ENCODE measurements at regions of chr13 and their contacts with region 1.

Region 1: DNA sequence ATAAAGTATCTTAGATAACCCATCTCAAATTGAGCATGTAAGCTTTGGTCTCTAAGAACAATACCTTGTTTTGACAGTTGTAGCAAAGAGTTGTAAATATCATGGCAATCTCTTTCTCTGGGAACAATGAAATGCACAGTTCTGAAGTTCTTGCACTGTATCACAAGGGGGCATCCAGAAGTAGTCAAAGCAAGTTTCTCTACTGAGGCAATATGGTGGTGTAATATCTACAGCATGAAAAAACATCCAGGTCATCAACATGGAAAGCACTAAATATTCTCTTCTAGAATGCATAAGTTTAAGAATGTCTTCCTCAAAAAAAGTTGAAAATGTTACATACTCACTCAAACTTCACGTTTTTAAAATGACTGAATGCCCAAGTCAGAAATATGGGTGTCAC is 19.6 kb downstream of the MTMR6 start:
- DNase-seq: no peak
- ATAC-seq: peak; percentile 58
- H3K4me3 ChIP-seq: no peak overlapping the region
- H3K27ac ChIP-seq: no peak overlapping the region
- H3K4me1 ChIP-seq: no peaks in the 10 kb centered on the region
- H3K27me3 ChIP-seq: no peaks in the 10 kb centered on the region
- CTCF ChIP-seq: peak; percentile 26

Region 2: GRCh38 chr13:25062485-25062884 is 205.2 kb before region 1 on chr13:
- intact Hi-C with region 1: no loop called
- DNase-seq: no peak
- ATAC-seq: no peak
- H3K4me3 ChIP-seq: no peak overlapping the region
- H3K27ac ChIP-seq: no peak overlapping the region
- H3K4me1 ChIP-seq: no peaks in the 10 kb centered on the region
- H3K27me3 ChIP-seq: peaks cover 8% of the 10 kb centered on the region
- CTCF ChIP-seq: no peak

Region 3: DNA sequence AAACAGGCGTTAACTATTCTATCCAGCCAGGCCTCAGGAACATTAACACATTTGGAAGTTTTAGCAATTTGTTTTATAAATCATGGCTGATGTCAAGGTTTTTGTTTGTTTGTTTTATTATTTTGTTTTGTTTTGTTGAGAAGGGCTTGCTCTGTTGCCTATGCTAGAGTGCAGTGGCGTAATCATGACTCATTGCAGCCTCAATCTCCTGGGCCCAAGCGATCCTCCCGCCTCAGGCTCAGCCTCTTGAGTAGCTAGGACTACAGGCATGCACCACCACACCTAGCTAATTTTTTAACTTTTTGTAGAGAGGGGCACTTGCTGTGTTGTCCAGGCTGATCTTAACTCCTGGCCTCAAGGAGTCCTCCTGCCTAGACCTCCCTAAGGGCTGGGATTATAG is 62.0 kb after region 1 on chr13:
- intact Hi-C with region 1: loop called (anchors 10 kb)
- DNase-seq: no peak
- ATAC-seq: no peak
- H3K4me3 ChIP-seq: no peak overlapping the region
- H3K27ac ChIP-seq: no peak overlapping the region
- H3K4me1 ChIP-seq: no peaks in the 10 kb centered on the region
- H3K27me3 ChIP-seq: no peaks in the 10 kb centered on the region
- CTCF ChIP-seq: no peak

Region 4: DNA sequence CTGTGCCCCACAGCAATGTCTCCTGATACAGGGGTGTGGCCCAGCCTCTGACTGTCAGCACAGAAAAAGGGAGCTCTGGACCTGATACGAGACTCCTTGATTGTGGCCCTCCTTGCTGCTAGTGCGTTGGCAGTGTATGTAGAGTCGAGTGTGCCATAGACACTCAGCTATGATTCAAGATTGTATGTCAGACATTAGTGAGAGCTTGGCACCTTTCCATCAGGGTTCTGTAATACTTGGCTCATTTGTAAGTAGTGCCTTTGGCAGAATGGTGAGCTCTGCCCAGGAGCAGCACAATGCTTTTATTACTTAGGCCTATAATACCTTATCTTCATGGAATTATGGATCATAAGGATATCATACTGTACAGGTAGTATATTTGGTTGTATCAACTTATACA is 187.4 kb after region 1 on chr13:
- intact Hi-C with region 1: no loop called
- DNase-seq: no peak
- ATAC-seq: peak; percentile 52
- H3K4me3 ChIP-seq: no peak overlapping the region
- H3K27ac ChIP-seq: no peak overlapping the region
- H3K4me1 ChIP-seq: no peaks in the 10 kb centered on the region
- H3K27me3 ChIP-seq: no peaks in the 10 kb centered on the region
- CTCF ChIP-seq: no peak